Sigmoid colon (tissue), 7 donors: ENCODE measurements at regions of chr4 and their contacts with region 1.

Region 1: GRCh38 chr4:14837860-14838259 is 164.4 kb upstream of the CPEB2 start:
- DNase-seq: no peak
- H3K4me3 ChIP-seq: no peak overlapping the region
- H3K27ac ChIP-seq: no peak overlapping the region
- H3K4me1 ChIP-seq: peaks cover 2 to 12% (median 11%) of the 10 kb centered on the region in 4 donors
- H3K27me3 ChIP-seq: no peaks in the 10 kb centered on the region
- CTCF ChIP-seq: peak in 1 of 4 experiments; percentile 20
- EP300 ChIP-seq: no peak
- POLR2A ChIP-seq: no peak

Region 2: GRCh38 chr4:14607578-14607977 is 230.3 kb before region 1 on chr4:
- intact Hi-C with region 1: loop called (anchors 5 kb)
- DNase-seq: no peak
- H3K4me3 ChIP-seq: no peak overlapping the region
- H3K27ac ChIP-seq: peak overlapping the region in 3 of 4 donors; percentile 11 to 30 (median 14)
- H3K4me1 ChIP-seq: peaks cover 0 to 19% (median 12%) of the 10 kb centered on the region in 4 donors
- H3K27me3 ChIP-seq: no peaks in the 10 kb centered on the region
- CTCF ChIP-seq: no peak
- EP300 ChIP-seq: peak in 2 of 4 donors; percentile 21 to 23
- POLR2A ChIP-seq: no peak

Region 3: GRCh38 chr4:14916554-14917297 is 78.9 kb after region 1 on chr4:
- intact Hi-C with region 1: loop called (anchors 5 kb)
- DNase-seq: no peak
- H3K4me3 ChIP-seq: no peak overlapping the region
- H3K27ac ChIP-seq: peak overlapping the region; percentile 31 to 64 (median 50)
- H3K4me1 ChIP-seq: peaks cover 0 to 10% (median 7%) of the 10 kb centered on the region in 4 donors
- H3K27me3 ChIP-seq: no peaks in the 10 kb centered on the region
- CTCF ChIP-seq: no peak
- EP300 ChIP-seq: peak in 1 of 4 donors; percentile 17
- POLR2A ChIP-seq: no peak